ENCODE measurements at regions of chr6 and their contacts with region 1.

Region 1: DNA sequence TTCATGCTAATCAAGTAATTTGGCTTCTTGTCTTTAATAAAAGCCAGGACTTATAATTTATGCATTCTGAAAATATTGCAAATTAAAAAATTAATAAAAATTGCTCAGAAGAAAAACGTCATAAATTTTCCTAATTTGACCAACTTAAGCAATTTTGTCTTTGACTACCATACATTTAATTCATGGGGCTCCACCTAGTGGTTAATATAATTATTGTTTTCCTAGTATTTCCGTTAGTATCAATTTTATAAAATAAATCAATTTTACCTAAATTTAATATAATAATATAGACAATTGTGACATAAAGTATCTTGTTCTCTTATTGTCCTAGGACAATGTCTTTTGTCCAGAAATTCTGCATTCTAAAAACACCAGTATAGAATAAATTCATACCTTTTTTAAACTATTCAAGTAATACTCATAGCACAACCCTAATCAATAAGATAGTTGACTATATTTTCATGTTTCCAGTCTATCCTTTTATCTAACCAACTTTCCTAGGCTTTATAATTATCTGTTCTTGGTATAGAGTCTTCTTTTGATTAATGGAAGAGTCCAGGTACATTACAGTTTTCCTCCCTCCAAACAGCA is 319.9 kb downstream of the TRDN start:
- DNase-seq: no peak
- H3K4me3 ChIP-seq: no peak overlapping the region
- H3K27ac ChIP-seq: no peak overlapping the region
- H3K4me1 ChIP-seq: no peaks in the 10 kb centered on the region
- H3K27me3 ChIP-seq: no peaks in the 10 kb centered on the region
- CTCF ChIP-seq: peak in 3 of 4 experiments; percentile 22 to 62 (median 43)
- EP300 ChIP-seq: no peak
- POLR2A ChIP-seq: no peak

Region 2: GRCh38 chr6:122730775-122731386 is 585.9 kb before region 1 on chr6:
- intact Hi-C with region 1: loop called (anchors 10 kb)
- DNase-seq: no peak
- H3K4me3 ChIP-seq: no peak overlapping the region
- H3K27ac ChIP-seq: no peak overlapping the region
- H3K4me1 ChIP-seq: no peaks in the 10 kb centered on the region
- H3K27me3 ChIP-seq: no peaks in the 10 kb centered on the region
- CTCF ChIP-seq: peak; percentile 30 to 78 (median 61)
- EP300 ChIP-seq: no peak
- POLR2A ChIP-seq: no peak

Region 3: DNA sequence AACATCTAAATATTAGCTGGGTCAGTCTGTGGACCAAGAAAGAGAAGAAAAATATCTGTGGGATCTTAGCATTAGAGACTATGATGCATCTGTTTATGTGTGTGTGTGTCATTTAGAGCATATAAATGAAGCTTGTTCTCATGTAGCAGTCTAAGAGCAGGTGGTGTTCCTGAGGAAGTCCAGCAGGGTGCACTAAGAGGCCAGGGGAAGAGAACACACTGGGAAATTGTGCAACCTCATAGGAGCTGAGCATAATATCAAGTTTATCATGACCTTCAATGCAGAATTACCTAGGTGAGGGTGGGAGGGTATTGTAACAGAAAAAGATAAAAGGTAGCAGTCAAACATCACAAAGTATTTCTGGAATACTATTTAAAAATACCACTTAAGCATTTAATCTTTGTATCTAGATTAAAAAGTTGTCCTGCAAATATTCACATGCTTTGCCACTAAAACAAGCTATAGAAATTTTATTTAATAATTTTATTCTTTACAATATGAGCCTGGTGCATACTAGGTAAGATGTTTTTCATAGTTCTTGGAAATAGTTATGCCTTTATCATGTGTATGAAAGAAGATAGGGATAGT is 447.3 kb before region 1 on chr6:
- intact Hi-C with region 1: loop called (anchors 2 kb)
- DNase-seq: no peak
- H3K4me3 ChIP-seq: no peak overlapping the region
- H3K27ac ChIP-seq: no peak overlapping the region
- H3K4me1 ChIP-seq: no peaks in the 10 kb centered on the region
- H3K27me3 ChIP-seq: no peaks in the 10 kb centered on the region
- CTCF ChIP-seq: peak in 3 of 4 experiments; percentile 39 to 61 (median 60)
- EP300 ChIP-seq: no peak
- POLR2A ChIP-seq: no peak

Region 4: GRCh38 chr6:122969999-122970533 is 346.8 kb before region 1 on chr6:
- intact Hi-C with region 1: loop called (anchors 10 kb)
- DNase-seq: no peak
- H3K4me3 ChIP-seq: no peak overlapping the region
- H3K27ac ChIP-seq: no peak overlapping the region
- H3K4me1 ChIP-seq: no peaks in the 10 kb centered on the region
- H3K27me3 ChIP-seq: no peaks in the 10 kb centered on the region
- CTCF ChIP-seq: no peak
- EP300 ChIP-seq: no peak
- POLR2A ChIP-seq: no peak

Measured in sigmoid colon (tissue), 7 donors.